Panc1 (cell line): ENCODE measurements at regions of chr2 and their contacts with region 1.

Region 1: DNA sequence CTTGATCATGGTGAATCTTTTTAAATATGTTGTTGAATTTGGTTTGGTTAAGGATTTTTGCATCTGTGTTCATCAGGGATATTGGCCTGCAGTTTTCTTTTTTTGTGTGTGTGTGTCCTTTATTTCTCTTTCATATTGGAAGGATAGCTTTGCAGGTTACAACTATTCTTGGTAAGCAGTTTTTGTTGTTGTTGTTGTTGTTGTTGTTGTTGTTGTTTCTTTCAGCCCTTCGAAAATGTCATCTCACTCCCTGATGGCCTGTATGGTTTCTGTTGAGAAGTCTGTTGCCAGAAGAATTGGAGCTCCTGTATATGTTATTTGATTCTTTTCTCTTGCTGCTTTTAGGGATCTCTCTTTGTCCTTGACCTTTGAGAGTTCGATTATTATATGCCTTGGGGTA is 74.8 kb downstream of the SEMA4F start:
- DNase-seq: no peak
- ATAC-seq: no peak
- H3K4me3 ChIP-seq: no peak overlapping the region
- H3K27ac ChIP-seq: no peak overlapping the region
- H3K4me1 ChIP-seq: no peaks in the 10 kb centered on the region
- H3K27me3 ChIP-seq: no peaks in the 10 kb centered on the region
- CTCF ChIP-seq: no peak

Region 2: DNA sequence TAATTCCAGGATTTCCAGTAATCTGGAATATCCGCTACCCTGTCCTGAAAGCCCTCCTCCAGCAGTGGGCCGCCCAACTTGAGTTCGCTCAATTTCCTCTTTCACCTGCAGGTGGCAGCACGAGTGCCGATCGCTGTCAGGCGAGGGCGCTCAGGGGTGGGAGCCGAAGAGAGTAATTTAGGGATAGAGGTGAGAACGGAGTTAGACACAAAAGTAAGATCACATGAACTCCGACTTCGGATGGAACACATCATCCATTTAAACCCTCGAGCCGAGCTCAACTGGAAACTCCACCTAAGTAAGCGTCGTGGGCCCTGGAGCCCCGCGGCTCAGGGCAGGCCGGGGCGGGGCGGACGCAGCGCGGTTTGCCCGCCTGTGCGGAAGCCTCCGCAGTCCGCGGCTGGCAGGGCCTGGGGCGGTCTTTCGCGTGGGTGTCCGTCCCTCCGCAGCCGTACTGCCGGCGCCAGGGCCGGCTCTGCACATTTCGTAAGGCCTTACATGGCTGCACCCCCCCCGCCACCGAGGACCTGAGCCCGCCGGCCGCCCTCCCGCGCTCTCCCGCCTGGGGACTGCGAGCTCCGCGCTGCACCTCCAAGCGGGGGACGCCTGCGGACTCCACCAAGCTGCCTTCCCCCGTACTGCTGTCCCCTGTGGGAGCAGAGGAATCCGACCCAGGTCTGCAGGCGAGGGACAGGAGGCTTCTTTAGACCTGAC is 13.6 kb before region 1 on chr2:
- CTCF ChIA-PET with region 1: interaction called, 11 read pairs
- POLR2A ChIA-PET with region 1: no interaction called
- in situ Hi-C with region 1: no loop called
- intact Hi-C with region 1: no loop called
- DNase-seq: peak; percentile 67
- ATAC-seq: peak; percentile 97
- H3K4me3 ChIP-seq: peak overlapping the region; percentile 53 to 71
- H3K27ac ChIP-seq: no peak overlapping the region
- H3K4me1 ChIP-seq: peaks cover 3% of the 10 kb centered on the region; the same call in 1 of the 2 replicates
- H3K27me3 ChIP-seq: peaks cover 21% of the 10 kb centered on the region
- CTCF ChIP-seq: peak; percentile 95